A549 (cell line): ENCODE measurements at regions of chr19 and their contacts with region 1.

Region 1: DNA sequence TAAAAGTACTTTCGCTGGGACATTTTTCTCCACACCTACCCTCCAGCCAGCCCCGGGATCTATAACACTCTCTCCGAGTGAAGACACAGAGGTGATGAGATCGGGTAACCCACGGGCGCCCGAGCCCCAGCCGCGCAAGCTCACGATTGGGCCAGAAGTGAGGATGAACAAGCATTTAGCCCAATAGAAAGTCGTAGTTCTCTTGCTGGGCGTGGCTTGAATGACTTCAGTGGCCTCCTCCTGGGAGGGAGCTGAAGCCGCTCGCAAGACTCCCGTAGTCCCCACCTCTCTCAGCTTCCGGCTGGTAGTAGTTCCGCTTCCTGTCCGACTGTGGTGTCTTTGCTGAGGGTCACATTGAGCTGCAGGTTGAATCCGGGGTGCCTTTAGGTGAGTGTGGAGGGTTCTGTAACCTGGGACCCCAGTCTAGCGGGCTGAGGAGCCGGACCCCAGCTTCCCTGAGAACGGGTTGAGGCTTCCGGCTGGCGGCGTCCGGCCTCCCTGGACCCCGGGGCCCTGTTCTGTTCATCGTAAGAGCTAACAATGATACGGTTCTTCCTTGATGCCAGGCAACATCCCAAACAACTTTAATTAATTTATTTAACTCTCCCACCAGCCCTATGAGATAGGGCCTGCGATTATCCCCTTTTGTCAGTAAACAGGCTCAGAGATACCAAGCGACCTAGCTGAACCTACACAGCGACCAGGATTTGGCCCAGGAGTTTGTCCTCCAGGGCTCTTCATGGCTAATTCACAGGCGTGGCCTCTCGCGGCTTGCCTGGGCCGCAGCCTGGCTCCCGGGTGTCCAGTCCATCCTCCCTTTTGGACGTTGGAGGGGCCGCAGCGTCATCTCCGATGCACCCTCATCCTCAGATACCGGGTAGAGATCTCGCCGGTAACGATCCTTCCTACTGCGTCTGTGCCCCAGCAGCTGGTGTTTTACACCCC is at the start of gene COX6B1:
- DNase-seq: peak; percentile 99 to 100
- ATAC-seq: peak; percentile 62 to 76
- H3K4me3 ChIP-seq: peak within 1 kb of the TSS; percentile 67
- H3K27ac ChIP-seq: peak within 1 kb of the TSS; percentile 81 to 84
- H3K4me1 ChIP-seq: peaks cover 18% of the 10 kb centered on the region
- CTCF ChIP-seq: no peak
- EP300 ChIP-seq: no peak
- POLR2A ChIP-seq: peak; percentile 96
- RAD21 ChIP-seq: no peak
- polyA plus RNA-seq, gene COX6B1: 749 and 1,115 TPM in 2 replicates

Region 2: GRCh38 chr19:35628565-35629331 is 19.5 kb before region 1 on chr19 and contains the start of gene RBM42:
- CTCF ChIA-PET with region 1: interaction called, 4 read pairs
- POLR2A ChIA-PET with region 1: interaction called, 10 read pairs
- DNase-seq: peak; percentile 100
- ATAC-seq: peak; percentile 99 to 100
- H3K4me3 ChIP-seq: peak within 1 kb of the TSS; percentile 79
- H3K27ac ChIP-seq: peak within 1 kb of the TSS; percentile 86 to 89
- H3K4me1 ChIP-seq: peaks cover 14% of the 10 kb centered on the region; the same call in 2 of the 3 replicates
- CTCF ChIP-seq: no peak
- EP300 ChIP-seq: no peak
- POLR2A ChIP-seq: peak; percentile 57
- RAD21 ChIP-seq: no peak
- polyA plus RNA-seq, gene RBM42: 62.1 and 80.4 TPM in 2 replicates

Region 3: DNA sequence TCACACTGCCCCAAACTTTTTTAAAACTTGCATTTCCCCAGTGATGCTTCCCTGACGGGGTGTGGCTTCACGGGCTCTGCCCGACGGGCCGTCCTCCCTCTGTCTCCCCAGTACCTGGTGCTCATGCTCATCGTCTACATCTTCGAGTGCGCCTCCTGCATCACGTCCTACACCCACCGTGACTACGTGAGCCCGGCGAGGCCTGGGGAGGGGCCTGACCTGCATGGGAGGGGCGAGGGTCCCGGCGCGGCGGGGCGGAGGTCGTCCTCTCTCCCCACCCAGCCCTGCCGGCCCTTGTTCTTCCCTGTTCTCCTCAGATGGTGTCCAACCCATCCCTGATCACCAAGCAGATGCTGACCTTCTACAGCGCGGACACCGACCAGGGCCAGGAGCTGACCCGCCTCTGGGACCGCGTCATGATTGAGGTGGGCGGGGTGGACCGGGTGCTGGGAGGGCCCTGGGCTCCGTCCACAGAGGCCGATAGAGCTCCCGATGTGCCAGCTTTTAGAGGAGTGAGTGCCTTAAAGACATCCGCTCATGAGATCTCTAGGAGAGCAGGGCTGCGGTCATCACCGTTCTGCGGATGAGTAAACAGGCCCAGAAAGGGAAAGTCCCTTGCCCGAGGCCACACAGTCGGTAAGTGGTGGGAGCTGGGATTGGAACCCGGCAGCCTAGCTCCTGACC is 25.0 kb after region 1 on chr19:
- CTCF ChIA-PET with region 1: interaction called, 3 read pairs
- POLR2A ChIA-PET with region 1: interaction called, 15 read pairs
- DNase-seq: peak; percentile 85 to 99
- ATAC-seq: peak; percentile 94 to 97
- H3K4me3 ChIP-seq: peak overlapping the region; percentile 47
- H3K27ac ChIP-seq: peak overlapping the region; percentile 42 to 77
- H3K4me1 ChIP-seq: no peaks in the 10 kb centered on the region
- CTCF ChIP-seq: no peak
- EP300 ChIP-seq: no peak
- POLR2A ChIP-seq: no peak
- RAD21 ChIP-seq: no peak

Region 4: DNA sequence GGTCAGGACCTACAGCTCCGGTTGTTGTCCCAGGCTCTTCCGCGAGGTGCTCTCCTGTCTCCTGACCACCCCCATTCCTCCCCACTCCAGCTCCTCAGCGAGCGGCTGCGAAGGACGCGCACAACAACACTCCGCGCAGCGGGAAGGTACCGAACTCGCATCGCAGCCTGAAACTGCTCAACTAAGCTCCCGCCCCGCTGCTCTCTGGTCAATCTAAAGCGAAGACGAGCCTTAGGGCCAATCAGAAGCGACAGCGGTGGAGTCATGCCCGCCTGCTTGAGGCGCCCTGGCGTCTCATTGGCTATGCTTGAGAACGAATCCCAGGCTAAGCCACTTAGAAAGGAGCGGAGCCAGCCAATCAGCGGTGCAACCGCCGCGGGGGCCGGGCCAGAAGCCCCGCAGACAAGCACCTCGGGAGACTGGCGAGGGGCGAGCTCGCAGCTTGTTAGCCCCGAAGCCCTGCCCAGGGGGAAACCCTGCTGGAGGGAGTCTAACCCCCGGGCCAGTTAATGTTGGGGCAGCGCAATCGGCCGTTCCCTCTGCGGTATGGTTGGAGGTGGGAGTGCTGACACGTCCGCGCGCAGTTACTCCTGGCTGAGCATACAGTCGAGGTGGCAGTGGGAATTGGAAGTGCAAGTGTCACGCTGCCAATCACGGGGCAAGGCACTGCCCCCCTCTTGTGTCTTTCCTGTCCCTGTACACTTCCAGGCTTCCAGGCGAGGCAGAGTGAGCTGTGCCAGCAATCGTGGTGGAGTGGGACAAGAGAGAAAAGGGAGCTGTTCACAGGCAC is 54.1 kb after region 1 on chr19:
- CTCF ChIA-PET with region 1: interaction called, 3 read pairs
- POLR2A ChIA-PET with region 1: interaction called, 11 read pairs
- DNase-seq: peak; percentile 100
- ATAC-seq: peak; percentile 98 to 99
- H3K4me3 ChIP-seq: peak overlapping the region; percentile 53
- H3K27ac ChIP-seq: peak overlapping the region; percentile 52 to 80
- H3K4me1 ChIP-seq: no peaks in the 10 kb centered on the region
- CTCF ChIP-seq: no peak
- EP300 ChIP-seq: no peak
- POLR2A ChIP-seq: peak; percentile 41
- RAD21 ChIP-seq: no peak